Tibial artery (tissue), 4 donors: ENCODE measurements at regions of chr5 and their contacts with region 1.

Region 1: GRCh38 chr5:95672486-95673469 is 10.0 kb downstream of the SPATA9 start:
- DNase-seq: no peak
- H3K4me3 ChIP-seq: no peak overlapping the region
- H3K27ac ChIP-seq: no peak overlapping the region
- H3K4me1 ChIP-seq: peaks cover 0 to 14% (median 9%) of the 10 kb centered on the region in 4 donors
- H3K27me3 ChIP-seq: no peaks in the 10 kb centered on the region
- CTCF ChIP-seq: no peak

Region 2: GRCh38 chr5:94870511-94871183 is 802.1 kb before region 1 on chr5:
- intact Hi-C with region 1: no loop called
- DNase-seq: no peak
- H3K4me3 ChIP-seq: no peak overlapping the region
- H3K27ac ChIP-seq: no peak overlapping the region
- H3K4me1 ChIP-seq: no peaks in the 10 kb centered on the region
- H3K27me3 ChIP-seq: no peaks in the 10 kb centered on the region
- CTCF ChIP-seq: no peak

Region 3: DNA sequence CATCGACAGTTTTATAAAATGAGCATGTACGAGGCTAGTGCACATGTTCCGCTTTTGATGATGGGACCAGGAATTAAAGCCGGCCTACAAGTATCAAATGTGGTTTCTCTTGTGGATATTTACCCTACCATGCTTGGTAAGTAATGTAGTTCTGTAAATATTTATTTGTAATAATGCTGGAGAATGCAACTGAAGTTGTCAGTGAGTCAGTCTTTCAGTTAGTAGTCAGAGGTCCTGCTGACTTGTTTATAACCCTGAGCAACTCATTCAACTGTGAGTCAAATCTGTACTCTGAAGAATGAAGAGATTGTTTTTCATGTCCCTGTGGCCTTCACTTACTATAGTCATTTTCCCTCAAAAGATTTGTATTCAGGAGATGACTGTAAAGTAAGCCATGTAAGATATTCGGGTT is 81.3 kb before region 1 on chr5:
- intact Hi-C with region 1: no loop called
- DNase-seq: no peak
- H3K4me3 ChIP-seq: no peak overlapping the region
- H3K27ac ChIP-seq: no peak overlapping the region
- H3K4me1 ChIP-seq: no peaks in the 10 kb centered on the region
- H3K27me3 ChIP-seq: no peaks in the 10 kb centered on the region
- CTCF ChIP-seq: no peak

Region 4: DNA sequence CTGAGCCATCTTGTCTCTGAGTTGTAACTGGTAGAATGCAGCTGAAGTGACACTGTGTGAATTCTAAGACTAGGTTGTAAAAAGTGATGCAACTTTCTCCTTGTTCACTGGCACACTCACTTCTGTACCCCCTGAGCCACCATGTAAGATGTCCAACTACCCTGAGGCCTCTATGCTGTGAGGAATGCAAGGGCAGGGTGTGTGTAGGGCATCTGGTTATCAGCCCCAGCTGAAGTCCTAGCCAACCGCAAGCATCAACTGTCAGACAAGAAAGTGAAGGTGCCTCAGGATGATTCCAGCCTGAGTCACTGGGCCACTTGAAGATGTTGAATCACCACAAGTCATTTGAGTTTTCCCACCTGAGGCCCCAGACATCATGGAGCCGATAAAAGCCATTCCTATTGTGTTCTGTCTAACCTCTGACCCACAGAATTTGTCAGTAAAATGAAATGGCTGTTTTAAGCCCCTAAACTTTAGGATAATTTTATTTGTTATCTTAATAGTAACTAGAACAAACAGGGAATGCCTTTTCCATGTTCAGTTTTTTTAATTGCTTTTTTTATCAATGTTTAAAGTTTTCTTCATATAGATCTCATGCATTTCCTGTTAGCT is 39.7 kb after region 1 on chr5:
- intact Hi-C with region 1: loop called (anchors 5 kb)
- DNase-seq: no peak
- H3K4me3 ChIP-seq: no peak overlapping the region
- H3K27ac ChIP-seq: no peak overlapping the region
- H3K4me1 ChIP-seq: peaks cover 0 to 12% (median 3%) of the 10 kb centered on the region in 4 donors
- H3K27me3 ChIP-seq: no peaks in the 10 kb centered on the region
- CTCF ChIP-seq: no peak

Region 5: GRCh38 chr5:96172436-96172835 is 499.7 kb after region 1 on chr5:
- intact Hi-C with region 1: no loop called
- DNase-seq: no peak
- H3K4me3 ChIP-seq: no peak overlapping the region
- H3K27ac ChIP-seq: no peak overlapping the region
- H3K4me1 ChIP-seq: peaks cover 0 to 13% (median 7%) of the 10 kb centered on the region in 4 donors
- H3K27me3 ChIP-seq: no peaks in the 10 kb centered on the region
- CTCF ChIP-seq: no peak

Region 6: GRCh38 chr5:96247097-96247701 is 574.4 kb after region 1 on chr5:
- intact Hi-C with region 1: no loop called
- DNase-seq: peak; percentile 66 to 89
- H3K4me3 ChIP-seq: peak overlapping the region; percentile 20 to 27
- H3K27ac ChIP-seq: peak overlapping the region; percentile 80 to 84
- H3K4me1 ChIP-seq: peaks cover 0 to 58% (median 10%) of the 10 kb centered on the region in 4 donors
- H3K27me3 ChIP-seq: no peaks in the 10 kb centered on the region
- CTCF ChIP-seq: no peak